ENCODE measurements at regions of chr10 and their contacts with region 1.

Region 1: DNA sequence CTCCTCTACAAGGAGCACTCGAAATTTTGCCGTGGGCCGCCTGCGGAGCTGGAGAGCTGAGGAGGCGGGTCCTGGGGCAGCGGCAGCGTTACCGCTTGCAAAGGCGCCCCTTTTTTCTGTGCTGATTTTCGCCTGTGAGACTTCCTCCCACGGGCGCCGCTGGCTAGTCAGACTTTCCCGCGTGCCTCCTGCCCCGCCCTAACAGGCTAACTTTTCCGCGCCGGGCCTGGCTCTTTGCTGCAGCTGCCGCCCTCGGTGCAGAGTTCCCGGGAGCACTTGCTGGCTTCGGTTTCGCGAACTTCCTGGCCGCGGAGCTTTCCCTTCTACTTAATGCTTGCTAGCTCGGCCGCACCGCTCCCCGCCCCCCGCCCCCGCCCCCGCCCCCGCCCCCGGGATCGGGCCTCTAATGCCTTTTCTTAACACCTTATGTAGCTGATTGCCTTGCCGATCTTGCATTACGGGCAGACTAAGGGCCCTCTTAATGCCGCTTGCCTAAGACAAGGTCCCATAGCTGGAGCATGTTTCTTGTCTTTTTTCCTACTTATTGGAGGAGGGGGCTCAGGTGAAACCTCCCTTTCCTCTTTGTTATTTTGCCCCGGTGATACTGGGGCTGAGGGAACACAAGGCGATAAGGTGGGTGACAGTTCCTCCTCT is 37.9 kb upstream of the RASGEF1A start:
- DNase-seq: peak in 8 of 9 experiments; percentile 33 to 72 (median 61)
- ATAC-seq: peak; percentile 69
- H3K4me3 ChIP-seq: peak overlapping the region; percentile 40
- H3K4me3 Mint-ChIP-seq: peak overlapping the region; percentile 79
- H3K27ac ChIP-seq: no peak overlapping the region
- H3K27ac Mint-ChIP-seq: no peak overlapping the region
- H3K4me1 ChIP-seq: peaks cover 32% of the 10 kb centered on the region
- H3K4me1 Mint-ChIP-seq: peaks cover 51% of the 10 kb centered on the region
- H3K27me3 ChIP-seq: no peaks in the 10 kb centered on the region
- H3K27me3 Mint-ChIP-seq: no peaks in the 10 kb centered on the region
- CTCF ChIP-seq: no peak

Region 2: GRCh38 chr10:43061760-43062159 is 243.1 kb before region 1 on chr10:
- CTCF ChIA-PET with region 1: no interaction called
- POLR2A ChIA-PET with region 1: no interaction called
- intact Hi-C with region 1: no loop called
- DNase-seq: no peak
- ATAC-seq: no peak
- H3K4me3 ChIP-seq: no peak overlapping the region
- H3K4me3 Mint-ChIP-seq: no peak overlapping the region
- H3K27ac ChIP-seq: no peak overlapping the region
- H3K27ac Mint-ChIP-seq: no peak overlapping the region
- H3K4me1 ChIP-seq: no peaks in the 10 kb centered on the region
- H3K4me1 Mint-ChIP-seq: no peaks in the 10 kb centered on the region
- H3K27me3 ChIP-seq: no peaks in the 10 kb centered on the region
- H3K27me3 Mint-ChIP-seq: peaks cover 9% of the 10 kb centered on the region
- CTCF ChIP-seq: no peak

Region 3: GRCh38 chr10:43255634-43256431 is 49.0 kb before region 1 on chr10:
- CTCF ChIA-PET with region 1: no interaction called
- POLR2A ChIA-PET with region 1: no interaction called
- intact Hi-C with region 1: no loop called
- DNase-seq: peak in 6 of 9 experiments; percentile 46 to 78 (median 56)
- ATAC-seq: peak; percentile 84
- H3K4me3 ChIP-seq: no peak overlapping the region
- H3K4me3 Mint-ChIP-seq: no peak overlapping the region
- H3K27ac ChIP-seq: peak overlapping the region in 1 of 2 experiments; percentile 70
- H3K27ac Mint-ChIP-seq: no peak overlapping the region
- H3K4me1 ChIP-seq: peaks cover 12% of the 10 kb centered on the region
- H3K4me1 Mint-ChIP-seq: peaks cover 8% of the 10 kb centered on the region
- H3K27me3 ChIP-seq: no peaks in the 10 kb centered on the region
- H3K27me3 Mint-ChIP-seq: peaks cover 3% of the 10 kb centered on the region
- CTCF ChIP-seq: peak; percentile 33

Region 4: GRCh38 chr10:43287056-43288007 is 17.5 kb before region 1 on chr10:
- CTCF ChIA-PET with region 1: interaction called, 14 read pairs
- POLR2A ChIA-PET with region 1: interaction called, 4 read pairs
- intact Hi-C with region 1: loop called in 1 of 2 experiments (anchors 2 kb)
- DNase-seq: peak; percentile 20 to 81 (median 58)
- ATAC-seq: peak; percentile 84
- H3K4me3 ChIP-seq: no peak overlapping the region
- H3K4me3 Mint-ChIP-seq: peak overlapping the region; percentile 46
- H3K27ac ChIP-seq: peak overlapping the region in 1 of 2 experiments; percentile 68
- H3K27ac Mint-ChIP-seq: peak overlapping the region; percentile 76
- H3K4me1 ChIP-seq: peaks cover 24% of the 10 kb centered on the region
- H3K4me1 Mint-ChIP-seq: peaks cover 39% of the 10 kb centered on the region
- H3K27me3 ChIP-seq: peaks cover 0 to 3% of the 10 kb centered on the region in 2 experiments
- H3K27me3 Mint-ChIP-seq: no peaks in the 10 kb centered on the region
- CTCF ChIP-seq: no peak